T-cell (primary cell): ENCODE measurements at regions of chr3 and their contacts with region 1.

Region 1: DNA sequence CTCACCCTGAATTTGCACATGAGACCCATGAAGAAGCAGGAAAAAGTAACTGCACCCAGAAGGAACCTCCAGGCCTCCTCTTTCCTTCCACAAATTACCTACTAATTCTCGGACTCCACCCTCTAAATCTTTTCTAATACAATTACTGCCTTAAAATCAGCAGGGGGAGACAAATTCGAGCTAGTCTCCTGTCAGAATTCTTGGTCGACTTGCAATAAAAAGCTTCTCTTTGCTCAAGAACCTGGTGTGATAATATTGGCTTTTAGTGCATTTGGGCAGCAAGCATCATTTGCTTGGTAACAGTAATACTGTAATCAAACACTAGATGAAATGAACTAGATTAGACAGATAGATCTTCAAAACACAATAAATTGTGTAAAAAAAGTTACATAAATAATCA is 281.9 kb downstream of the RAP2B start:
- DNase-seq: peak in 1 of 35 experiments; percentile 22
- ATAC-seq: no peak
- H3K4me3 ChIP-seq: no peak overlapping the region
- H3K4me3 Mint-ChIP-seq: no peak overlapping the region
- H3K27ac ChIP-seq: no peak overlapping the region
- H3K27ac Mint-ChIP-seq: no peak overlapping the region
- H3K4me1 ChIP-seq: peaks cover 3 to 6% of the 10 kb centered on the region in 2 experiments
- H3K4me1 Mint-ChIP-seq: peaks cover 12 to 24% (median 13%) of the 10 kb centered on the region in 3 donors
- H3K27me3 ChIP-seq: no peaks in the 10 kb centered on the region
- H3K27me3 Mint-ChIP-seq: no peaks in the 10 kb centered on the region

Region 2: GRCh38 chr3:153372326-153372725 is 71.6 kb before region 1 on chr3:
- CTCF ChIA-PET with region 1: no interaction called
- POLR2A ChIA-PET with region 1: no interaction called
- DNase-seq: no peak
- ATAC-seq: no peak
- H3K4me3 ChIP-seq: no peak overlapping the region
- H3K4me3 Mint-ChIP-seq: no peak overlapping the region
- H3K27ac ChIP-seq: no peak overlapping the region
- H3K27ac Mint-ChIP-seq: no peak overlapping the region
- H3K4me1 ChIP-seq: no peaks in the 10 kb centered on the region
- H3K4me1 Mint-ChIP-seq: no peaks in the 10 kb centered on the region
- H3K27me3 ChIP-seq: no peaks in the 10 kb centered on the region
- H3K27me3 Mint-ChIP-seq: peaks cover under 1 to 2% of the 10 kb centered on the region in 2 donors

Region 3: DNA sequence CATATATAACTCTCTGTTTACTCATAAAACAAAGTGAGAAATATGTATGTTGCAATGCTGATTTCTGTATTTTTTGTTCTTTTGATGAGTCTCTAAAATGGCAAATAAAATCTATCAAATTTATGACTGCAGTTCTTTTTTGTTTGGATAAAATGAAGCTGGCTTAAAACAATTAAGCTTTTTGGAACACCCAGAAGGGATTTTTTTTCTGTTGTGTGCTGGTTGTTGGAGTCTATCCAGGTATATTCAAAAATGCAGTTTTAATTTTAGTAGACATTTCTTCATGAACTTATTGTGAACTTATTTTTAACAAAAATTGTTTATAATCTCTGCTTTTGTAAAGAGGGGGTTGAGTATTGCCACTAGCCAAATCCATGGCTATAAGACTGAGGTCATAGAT is 123.6 kb after region 1 on chr3:
- CTCF ChIA-PET with region 1: no interaction called
- POLR2A ChIA-PET with region 1: no interaction called
- DNase-seq: no peak
- ATAC-seq: no peak
- H3K4me3 ChIP-seq: no peak overlapping the region
- H3K4me3 Mint-ChIP-seq: no peak overlapping the region
- H3K27ac ChIP-seq: no peak overlapping the region
- H3K27ac Mint-ChIP-seq: no peak overlapping the region
- H3K4me1 ChIP-seq: no peaks in the 10 kb centered on the region
- H3K4me1 Mint-ChIP-seq: no peaks in the 10 kb centered on the region
- H3K27me3 ChIP-seq: no peaks in the 10 kb centered on the region
- H3K27me3 Mint-ChIP-seq: no peaks in the 10 kb centered on the region

Region 4: DNA sequence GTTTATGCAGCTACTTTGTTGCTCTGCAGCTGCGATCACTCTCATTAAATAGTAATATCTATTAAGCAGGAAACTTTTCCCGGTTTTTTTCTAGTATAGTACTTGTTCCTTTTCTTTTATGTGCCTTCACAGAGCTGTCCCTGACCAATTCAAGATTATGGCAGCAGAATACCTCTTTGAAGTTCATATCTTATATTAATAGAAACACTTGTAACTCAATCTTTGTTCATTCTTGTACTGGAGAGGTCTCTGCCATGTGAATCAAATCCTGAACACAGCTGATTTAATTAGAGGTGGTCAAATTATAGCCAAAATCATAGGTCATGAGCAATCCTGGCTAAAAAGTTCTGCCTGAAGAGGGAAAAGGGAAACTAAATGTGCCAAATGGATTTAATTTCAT is 278.2 kb after region 1 on chr3:
- CTCF ChIA-PET with region 1: no interaction called
- POLR2A ChIA-PET with region 1: interaction called in 1 of 2 experiments, 10 read pairs
- DNase-seq: no peak
- ATAC-seq: no peak
- H3K4me3 ChIP-seq: no peak overlapping the region
- H3K4me3 Mint-ChIP-seq: no peak overlapping the region
- H3K27ac ChIP-seq: no peak overlapping the region
- H3K27ac Mint-ChIP-seq: no peak overlapping the region
- H3K4me1 ChIP-seq: no peaks in the 10 kb centered on the region
- H3K4me1 Mint-ChIP-seq: no peaks in the 10 kb centered on the region
- H3K27me3 ChIP-seq: peaks cover 0 to 3% of the 10 kb centered on the region in 2 experiments
- H3K27me3 Mint-ChIP-seq: peaks cover 0 to 8% of the 10 kb centered on the region in 2 donors